ENCODE measurements at regions of chr7 and their contacts with region 1.

Region 1: GRCh38 chr7:20299647-20300312 is 30.9 kb upstream of the ITGB8 start:
- DNase-seq: no peak
- H3K4me3 ChIP-seq: no peak overlapping the region
- H3K27ac ChIP-seq: no peak overlapping the region
- H3K4me1 ChIP-seq: no peaks in the 10 kb centered on the region
- H3K27me3 ChIP-seq: no peaks in the 10 kb centered on the region
- CTCF ChIP-seq: no peak
- EP300 ChIP-seq: no peak
- POLR2A ChIP-seq: no peak
- RAD21 ChIP-seq: no peak

Region 2: GRCh38 chr7:20310963-20311742 is 11.4 kb after region 1 on chr7:
- CTCF ChIA-PET with region 1: interaction called, 13 read pairs
- POLR2A ChIA-PET with region 1: no interaction called
- DNase-seq: no peak
- H3K4me3 ChIP-seq: no peak overlapping the region
- H3K27ac ChIP-seq: no peak overlapping the region
- H3K4me1 ChIP-seq: peaks cover 4 to 10% (median 7%) of the 10 kb centered on the region in 4 experiments
- H3K27me3 ChIP-seq: no peaks in the 10 kb centered on the region
- CTCF ChIP-seq: peak in 1 of 3 experiments; percentile 30; a peak in 2 of 4 replicates
- EP300 ChIP-seq: no peak
- POLR2A ChIP-seq: no peak
- RAD21 ChIP-seq: peak; percentile 40 to 52

Region 3: GRCh38 chr7:20407585-20408461 is 108.0 kb after region 1 on chr7:
- CTCF ChIA-PET with region 1: no interaction called
- POLR2A ChIA-PET with region 1: no interaction called
- DNase-seq: no peak
- H3K4me3 ChIP-seq: no peak overlapping the region
- H3K27ac ChIP-seq: no peak overlapping the region
- H3K4me1 ChIP-seq: peaks cover 0 to 5% (median 0%) of the 10 kb centered on the region in 4 experiments; a peak in 1 of 7 replicates
- H3K27me3 ChIP-seq: peaks cover 0 to 1% (median 0%) of the 10 kb centered on the region in 4 experiments; a peak in 1 of 7 replicates
- CTCF ChIP-seq: no peak
- EP300 ChIP-seq: no peak
- POLR2A ChIP-seq: no peak
- RAD21 ChIP-seq: no peak

Measured in H1 (cell line).